Aorta (tissue), 5 donors: ENCODE measurements at regions of chr2 and their contacts with region 1.

Region 1: GRCh38 chr2:25041928-25042320 is at the start of gene EFR3B:
- DNase-seq: peak; percentile 97
- ATAC-seq: peak; percentile 98
- H3K4me3 ChIP-seq: peak within 1 kb of the TSS; percentile 42 to 57
- H3K27ac ChIP-seq: peak within 1 kb of the TSS in 1 of 2 donors; percentile 13
- H3K4me1 ChIP-seq: no peaks in the 10 kb centered on the region
- H3K27me3 ChIP-seq: no peaks in the 10 kb centered on the region
- total RNA-seq, gene EFR3B: 1.3 TPM

Region 2: GRCh38 chr2:24971536-24972314 is 70.2 kb before region 1 on chr2 and contains the start of gene DNAJC27:
- intact Hi-C with region 1: loop called (anchors 2 to 5 kb)
- DNase-seq: peak; percentile 99
- ATAC-seq: peak; percentile 98
- H3K4me3 ChIP-seq: peak within 1 kb of the TSS; percentile 56 to 80
- H3K27ac ChIP-seq: peak within 1 kb of the TSS; percentile 98
- H3K4me1 ChIP-seq: no peaks in the 10 kb centered on the region
- H3K27me3 ChIP-seq: no peaks in the 10 kb centered on the region
- total RNA-seq, gene DNAJC27: 6.7 to 7.3 TPM

Region 3: DNA sequence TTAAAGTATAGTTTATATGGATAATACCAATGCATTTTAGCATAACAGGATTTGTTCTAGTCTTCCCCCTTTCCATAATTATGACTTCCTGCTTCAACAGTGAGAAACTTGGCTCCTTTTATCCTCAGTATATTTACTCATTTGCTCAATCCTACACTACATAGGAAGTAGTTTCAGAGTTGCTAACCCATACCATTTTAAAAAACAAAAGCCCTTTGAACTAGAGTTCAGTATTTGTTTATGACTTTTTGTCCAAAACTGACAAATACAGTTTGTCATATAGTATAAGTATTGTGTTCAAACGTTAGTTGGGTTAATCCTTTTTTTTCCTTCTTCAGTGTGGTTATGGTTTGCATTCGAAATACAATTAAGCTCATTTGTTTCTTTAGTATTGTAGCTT is 64.3 kb before region 1 on chr2:
- intact Hi-C with region 1: loop called (anchors 2 to 5 kb)
- DNase-seq: no peak
- ATAC-seq: no peak
- H3K4me3 ChIP-seq: no peak overlapping the region
- H3K27ac ChIP-seq: no peak overlapping the region
- H3K4me1 ChIP-seq: no peaks in the 10 kb centered on the region
- H3K27me3 ChIP-seq: no peaks in the 10 kb centered on the region

Region 4: GRCh38 chr2:25131567-25132298 is 89.8 kb after region 1 on chr2:
- intact Hi-C with region 1: loop called in 1 of 2 experiments (anchors 5 kb)
- DNase-seq: no peak
- ATAC-seq: peak; percentile 6
- H3K4me3 ChIP-seq: no peak overlapping the region
- H3K27ac ChIP-seq: no peak overlapping the region
- H3K4me1 ChIP-seq: no peaks in the 10 kb centered on the region
- H3K27me3 ChIP-seq: no peaks in the 10 kb centered on the region

Region 5: GRCh38 chr2:25168256-25169072 is 126.5 kb after region 1 on chr2 and contains the start of gene POMC:
- intact Hi-C with region 1: no loop called
- DNase-seq: peak in 1 of 2 donors; percentile 83
- ATAC-seq: peak; percentile 52
- H3K4me3 ChIP-seq: peak within 1 kb of the TSS; percentile 1 to 37
- H3K27ac ChIP-seq: no peak within 1 kb of the TSS
- H3K4me1 ChIP-seq: no peaks in the 10 kb centered on the region
- H3K27me3 ChIP-seq: no peaks in the 10 kb centered on the region
- total RNA-seq, gene POMC: 1.2 to 1.4 TPM